ENCODE measurements at regions of chr7 and their contacts with region 1.

Region 1: GRCh38 chr7:95690367-95690947 is 81.9 kb upstream of the DYNC1I1 start:
- H3K4me3 ChIP-seq: no peak overlapping the region
- H3K27ac ChIP-seq: no peak overlapping the region
- H3K4me1 ChIP-seq: no peaks in the 10 kb centered on the region
- CTCF ChIP-seq: peak; percentile 69

Region 2: DNA sequence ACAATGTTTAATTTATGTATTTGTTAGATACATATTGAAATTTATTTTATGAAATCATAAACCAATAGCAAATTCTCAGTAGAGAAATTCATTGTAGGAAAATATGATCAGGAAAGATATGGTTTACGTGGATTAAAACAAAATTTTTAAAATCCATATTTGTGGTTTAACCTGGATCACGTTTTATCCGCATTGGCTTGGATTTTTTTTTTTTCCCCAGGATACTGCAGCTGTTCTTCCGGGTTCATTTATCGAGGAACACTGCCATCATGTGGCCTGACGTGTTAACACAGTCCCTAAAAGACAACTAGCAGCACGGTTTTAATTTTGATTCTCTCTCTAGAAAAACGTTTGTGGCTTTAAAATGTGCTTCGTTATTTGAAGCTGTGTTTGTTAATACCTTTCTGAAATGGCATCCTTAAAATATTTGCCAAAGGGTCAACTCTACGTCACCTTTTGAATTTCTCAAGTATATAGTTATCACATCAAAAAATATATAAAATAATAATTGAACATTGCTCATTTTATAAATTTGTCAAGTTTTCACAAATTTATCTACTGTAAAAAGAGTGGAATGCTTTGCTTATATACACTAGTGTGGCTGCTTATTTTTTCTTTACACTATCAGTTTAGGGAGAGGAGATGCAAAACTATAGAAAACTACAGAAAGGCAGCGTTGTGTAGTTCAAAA is 213.4 kb before region 1 on chr7:
- CTCF ChIA-PET with region 1: interaction called, 19 read pairs
- POLR2A ChIA-PET with region 1: no interaction called
- H3K4me3 ChIP-seq: no peak overlapping the region
- H3K27ac ChIP-seq: no peak overlapping the region
- H3K4me1 ChIP-seq: no peaks in the 10 kb centered on the region
- CTCF ChIP-seq: peak; percentile 72; the same call in 1 of the 2 replicates

Region 3: GRCh38 chr7:95520136-95520535 is 170.3 kb before region 1 on chr7:
- CTCF ChIA-PET with region 1: interaction called, 324 read pairs
- POLR2A ChIA-PET with region 1: no interaction called
- H3K4me3 ChIP-seq: no peak overlapping the region
- H3K27ac ChIP-seq: no peak overlapping the region
- H3K4me1 ChIP-seq: no peaks in the 10 kb centered on the region
- CTCF ChIP-seq: no peak

Region 4: GRCh38 chr7:95534796-95535195 is 155.7 kb before region 1 on chr7:
- CTCF ChIA-PET with region 1: interaction called, 324 read pairs
- POLR2A ChIA-PET with region 1: no interaction called
- H3K4me3 ChIP-seq: no peak overlapping the region
- H3K27ac ChIP-seq: no peak overlapping the region
- H3K4me1 ChIP-seq: no peaks in the 10 kb centered on the region
- CTCF ChIP-seq: no peak

Region 5: GRCh38 chr7:95672434-95672833 is 18.0 kb before region 1 on chr7:
- CTCF ChIA-PET with region 1: interaction called, 17 read pairs
- POLR2A ChIA-PET with region 1: no interaction called
- H3K4me3 ChIP-seq: no peak overlapping the region
- H3K27ac ChIP-seq: no peak overlapping the region
- H3K4me1 ChIP-seq: no peaks in the 10 kb centered on the region
- CTCF ChIP-seq: no peak